PC-9 (cell line): ENCODE measurements at regions of chr4 and their contacts with region 1.

Region 1: DNA sequence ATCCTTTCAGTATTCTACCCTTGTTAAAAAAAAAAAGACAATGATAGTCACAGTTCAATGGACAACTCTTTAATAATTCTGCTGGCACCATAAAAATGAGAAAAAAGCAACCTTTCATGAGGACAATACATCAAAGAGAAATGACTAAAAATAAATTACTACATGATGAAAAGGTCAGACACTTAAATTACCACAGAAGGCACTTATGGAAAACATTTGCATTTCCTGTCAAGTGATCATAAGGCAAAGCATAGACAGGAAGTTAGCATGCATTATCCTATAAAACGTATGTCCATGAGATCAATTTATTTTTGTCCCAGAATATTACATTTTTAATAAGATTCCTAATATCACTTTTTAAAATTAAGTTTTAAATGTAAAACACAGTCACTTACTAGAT is 303.8 kb downstream of the SPOCK3 start:
- DNase-seq: no peak
- H3K4me3 ChIP-seq: no peak overlapping the region
- H3K27ac ChIP-seq: no peak overlapping the region
- H3K4me1 ChIP-seq: no peaks in the 10 kb centered on the region
- H3K27me3 ChIP-seq: no peaks in the 10 kb centered on the region
- CTCF ChIP-seq: no peak

Region 2: DNA sequence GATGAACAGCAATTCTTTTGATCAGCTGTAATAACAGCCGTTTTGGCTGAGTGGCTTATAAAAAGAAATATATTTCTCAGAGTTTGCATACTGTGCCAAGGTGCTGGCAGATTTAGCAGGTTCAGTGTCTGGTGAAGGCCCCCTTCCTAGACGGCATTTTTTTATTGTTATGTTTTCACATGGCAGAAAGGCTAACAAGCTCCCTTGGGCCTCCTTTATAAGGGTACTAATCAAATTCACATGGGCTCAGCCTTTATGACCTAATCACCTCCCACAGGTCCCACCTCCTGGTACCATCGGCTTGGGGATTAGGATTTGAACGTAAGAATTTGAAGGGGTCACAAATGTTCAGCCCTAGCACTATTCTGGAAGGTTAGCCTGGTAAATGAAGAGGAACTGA is 128.1 kb before region 1 on chr4:
- CTCF ChIA-PET with region 1: no interaction called
- POLR2A ChIA-PET with region 1: no interaction called
- intact Hi-C with region 1: no loop called
- DNase-seq: no peak
- H3K4me3 ChIP-seq: no peak overlapping the region
- H3K27ac ChIP-seq: no peak overlapping the region
- H3K4me1 ChIP-seq: no peaks in the 10 kb centered on the region
- H3K27me3 ChIP-seq: no peaks in the 10 kb centered on the region
- CTCF ChIP-seq: no peak

Region 3: DNA sequence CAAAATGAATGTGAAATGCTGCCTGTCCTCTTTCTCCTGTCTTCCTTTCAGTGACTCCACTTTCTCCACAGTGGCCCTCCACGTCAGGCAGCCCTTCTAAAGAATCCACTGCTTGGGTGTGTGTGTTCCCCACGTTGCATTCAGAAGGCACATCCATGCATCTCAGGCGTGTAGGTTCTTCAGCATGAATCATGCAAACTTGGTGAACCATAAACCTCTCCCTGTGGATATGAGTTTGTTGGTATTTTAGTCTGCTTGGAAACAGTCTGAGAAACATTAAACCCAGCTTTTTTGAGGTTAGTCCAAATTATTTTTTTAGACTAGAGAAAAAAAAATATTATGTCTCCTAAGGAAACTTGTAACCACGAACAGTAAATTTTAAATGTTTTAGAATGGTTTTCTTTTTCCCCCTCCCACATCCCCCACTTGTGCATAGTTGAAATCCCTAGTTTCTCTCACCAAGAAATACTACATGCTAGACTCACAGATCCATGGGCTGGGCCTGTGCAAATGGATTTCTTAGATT is 1828.0 kb after region 1 on chr4:
- CTCF ChIA-PET with region 1: interaction called, 14 read pairs
- POLR2A ChIA-PET with region 1: no interaction called
- intact Hi-C with region 1: no loop called
- DNase-seq: no peak
- H3K4me3 ChIP-seq: no peak overlapping the region
- H3K27ac ChIP-seq: no peak overlapping the region
- H3K4me1 ChIP-seq: no peaks in the 10 kb centered on the region
- H3K27me3 ChIP-seq: no peaks in the 10 kb centered on the region
- CTCF ChIP-seq: no peak